Lower leg skin (tissue), 4 donors: ENCODE measurements at regions of chr19 and their contacts with region 1.

Region 1: DNA sequence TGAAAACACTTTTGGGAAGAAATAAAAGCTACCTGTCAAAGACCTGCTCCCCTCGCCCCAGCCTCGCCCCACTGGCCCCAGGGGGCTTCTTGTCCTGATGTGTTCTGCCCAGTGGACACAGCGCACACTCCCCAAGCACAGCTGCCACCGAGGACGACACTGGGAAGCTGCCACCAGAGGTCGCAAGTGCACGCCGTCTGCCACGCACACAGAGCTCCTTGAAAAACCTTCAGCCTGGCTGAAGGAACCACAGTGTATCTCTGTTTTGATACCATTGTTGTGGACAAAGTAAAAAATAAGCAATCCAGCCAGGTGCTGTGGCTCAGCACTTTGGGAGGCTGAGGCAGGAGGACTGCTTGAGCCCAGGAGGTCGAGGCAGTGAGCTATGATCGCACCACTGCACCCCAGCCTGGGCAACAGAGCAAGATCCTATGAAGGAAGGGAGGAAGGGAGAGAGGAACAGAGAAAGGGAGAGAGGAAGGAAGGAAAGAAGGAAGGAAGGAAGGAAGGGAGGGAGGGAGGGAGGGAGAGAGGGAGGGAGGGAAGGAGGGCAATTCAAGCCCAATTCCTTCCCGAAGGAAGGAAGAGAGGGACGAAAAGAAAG is 57.3 kb downstream of the CEBPG start:
- DNase-seq: peak; percentile 55 to 93
- H3K4me3 ChIP-seq: no peak overlapping the region
- CTCF ChIP-seq: no peak
- POLR2A ChIP-seq: no peak

Region 2: GRCh38 chr19:33767898-33768413 is 337.2 kb after region 1 on chr19:
- intact Hi-C with region 1: loop called (anchors 2 kb)
- DNase-seq: no peak
- H3K4me3 ChIP-seq: no peak overlapping the region
- CTCF ChIP-seq: no peak
- POLR2A ChIP-seq: no peak